Activated T-helper 1 cell treated with anti-CD3 and anti-CD28 coated beads, Interleukin-12 subunit alpha, Interleukin-12 subunit beta, Interleukin-2, Interleukin-4 antibody, amounts not matched to agents 30 ng/mL and 10 ng/mL and 1 ng/mL, durations not matched to agents 14 hours and 24 hours and 36 hours (primary cell): ENCODE measurements at regions of chr5 and their contacts with region 1.

Region 1: DNA sequence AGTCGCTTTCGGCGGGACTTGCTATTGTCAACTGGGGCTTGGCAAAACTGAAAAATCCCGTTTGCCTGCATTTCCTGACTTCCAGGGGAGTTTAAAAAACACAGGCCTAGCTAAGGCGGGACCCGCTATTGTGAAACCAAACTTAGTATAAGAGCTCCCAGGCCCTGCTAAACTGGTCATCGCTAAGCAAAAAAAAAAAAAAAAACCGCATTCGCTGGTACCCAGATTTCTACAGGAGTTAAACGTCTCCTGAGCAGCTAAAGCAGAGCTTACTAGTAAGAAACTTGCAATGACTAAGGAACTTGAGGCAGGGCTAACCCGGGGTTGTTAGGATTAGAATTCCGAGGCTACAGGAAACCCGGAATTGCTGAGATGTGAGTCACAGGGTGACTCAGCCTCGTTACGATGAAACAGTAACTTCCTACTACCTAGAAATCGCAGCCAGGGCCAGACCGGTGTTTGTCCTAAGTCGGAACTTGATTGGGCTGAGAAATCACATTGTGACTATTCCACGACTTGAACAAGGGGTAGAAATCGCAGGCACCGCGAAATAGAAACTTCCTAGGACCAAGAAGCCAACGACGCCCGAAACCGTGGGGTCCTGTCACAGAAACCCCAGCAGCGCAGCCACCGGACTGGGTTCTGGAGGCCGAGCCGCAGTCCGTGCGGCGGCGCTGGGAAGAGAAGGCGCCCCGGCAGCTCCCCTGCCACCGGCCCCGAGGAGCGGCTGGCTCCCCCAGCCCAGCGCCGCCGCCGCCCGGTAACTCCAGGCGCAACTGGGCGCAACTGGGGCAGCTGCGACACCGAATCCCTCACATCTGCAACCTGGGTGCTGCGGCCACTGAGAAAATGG is 89.5 kb downstream of the ANXA2R start:
- DNase-seq: peak; percentile 60
- H3K4me3 Mint-ChIP-seq: peak overlapping the region; percentile 88
- H3K27ac Mint-ChIP-seq: peak overlapping the region; percentile 97
- H3K4me1 Mint-ChIP-seq: peaks cover 37% of the 10 kb centered on the region
- H3K27me3 Mint-ChIP-seq: peaks cover 8% of the 10 kb centered on the region

Region 2: GRCh38 chr5:42876375-42876844 is 74.3 kb before region 1 on chr5:
- intact Hi-C with region 1: no loop called
- DNase-seq: no peak
- H3K4me3 Mint-ChIP-seq: no peak overlapping the region
- H3K27ac Mint-ChIP-seq: no peak overlapping the region
- H3K4me1 Mint-ChIP-seq: peaks cover 12% of the 10 kb centered on the region
- H3K27me3 Mint-ChIP-seq: peaks cover 3% of the 10 kb centered on the region

Region 3: GRCh38 chr5:42908509-42909488 is 41.9 kb before region 1 on chr5:
- intact Hi-C with region 1: loop called (anchors 1 kb)
- DNase-seq: peak; percentile 84
- H3K4me3 Mint-ChIP-seq: peak overlapping the region; percentile 81
- H3K27ac Mint-ChIP-seq: peak overlapping the region; percentile 50
- H3K4me1 Mint-ChIP-seq: peaks cover 12% of the 10 kb centered on the region
- H3K27me3 Mint-ChIP-seq: peaks cover 26% of the 10 kb centered on the region

Region 4: DNA sequence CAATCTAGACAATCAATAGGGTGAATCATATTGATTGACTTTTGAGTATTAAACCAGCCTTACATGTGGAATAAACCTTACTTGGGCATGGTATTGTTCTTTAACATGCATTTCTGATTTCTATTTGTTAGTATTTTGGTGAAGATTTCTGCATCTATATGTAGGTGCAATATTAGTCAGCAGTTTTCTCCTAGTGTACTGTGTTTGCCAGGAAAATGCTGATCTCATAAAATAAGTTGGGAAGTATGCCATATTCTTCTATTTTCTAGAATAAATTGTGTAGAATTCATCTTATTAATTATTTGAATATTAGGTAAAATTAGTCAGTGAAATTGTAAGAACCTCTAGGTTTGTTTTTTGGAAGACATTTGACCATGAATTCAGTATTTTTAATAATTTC is 51.1 kb after region 1 on chr5:
- intact Hi-C with region 1: no loop called
- DNase-seq: no peak
- H3K4me3 Mint-ChIP-seq: no peak overlapping the region
- H3K27ac Mint-ChIP-seq: no peak overlapping the region
- H3K4me1 Mint-ChIP-seq: peaks cover 6% of the 10 kb centered on the region
- H3K27me3 Mint-ChIP-seq: peaks cover 8% of the 10 kb centered on the region

Region 5: GRCh38 chr5:43019614-43020293 is 69.1 kb after region 1 on chr5:
- intact Hi-C with region 1: loop called (anchors 1 kb)
- DNase-seq: peak; percentile 83
- H3K4me3 Mint-ChIP-seq: peak overlapping the region; percentile 90
- H3K27ac Mint-ChIP-seq: peak overlapping the region; percentile 97
- H3K4me1 Mint-ChIP-seq: peaks cover 43% of the 10 kb centered on the region
- H3K27me3 Mint-ChIP-seq: no peaks in the 10 kb centered on the region

Region 6: DNA sequence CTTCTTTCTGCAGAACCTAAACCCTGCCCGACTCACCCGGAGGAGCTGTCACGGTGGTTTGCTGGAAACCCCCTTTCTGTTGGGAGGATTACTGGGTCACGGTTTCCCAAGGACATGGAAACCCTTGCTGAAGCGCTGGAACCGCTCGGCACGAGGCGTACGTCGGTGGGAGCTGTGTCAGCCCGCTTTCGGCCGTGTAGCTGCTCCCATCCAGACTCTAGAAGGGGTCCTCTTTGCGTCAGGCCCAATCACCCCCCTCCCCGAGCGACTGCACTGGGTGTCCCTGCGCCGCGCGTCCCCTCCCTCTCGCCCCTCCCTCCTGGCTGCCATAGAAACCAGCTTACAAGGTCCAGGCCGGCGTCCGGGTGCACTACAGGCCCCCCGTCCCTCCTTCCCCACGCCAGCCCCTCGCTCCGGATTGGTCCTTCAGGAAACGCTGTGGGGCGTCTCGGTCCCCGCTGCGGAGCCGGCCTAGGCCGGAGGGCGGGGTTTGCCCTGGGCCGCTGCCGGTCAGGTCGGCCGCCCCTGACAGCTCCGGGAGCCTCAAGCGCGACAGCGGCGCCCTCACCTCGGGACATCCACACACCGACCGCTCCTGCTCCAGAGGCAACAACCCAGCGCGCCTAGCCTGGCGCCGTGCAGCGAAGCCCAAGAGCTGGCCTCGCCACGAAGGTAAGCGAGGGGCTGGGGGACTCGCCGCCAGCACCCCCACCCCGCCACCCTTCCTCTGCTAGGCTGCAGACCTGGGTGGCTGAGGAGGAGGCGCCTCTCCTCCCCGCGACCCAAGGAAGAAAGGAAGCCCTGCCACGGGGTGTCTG is 241.3 kb after region 1 on chr5 and contains the start of gene NIM1K:
- intact Hi-C with region 1: loop called (anchors 5 kb)
- DNase-seq: peak; percentile 39
- H3K4me3 Mint-ChIP-seq: peak within 1 kb of the TSS; percentile 85
- H3K27ac Mint-ChIP-seq: peak within 1 kb of the TSS; percentile 89
- H3K4me1 Mint-ChIP-seq: peaks cover 40% of the 10 kb centered on the region
- H3K27me3 Mint-ChIP-seq: peaks cover 22% of the 10 kb centered on the region
- total RNA-seq, gene NIM1K: 0.39 and 0.67 TPM in 2 replicates